ENCODE measurements at regions of chr5 and their contacts with region 1.

Region 1: GRCh38 chr5:72018146-72018803 is 89.0 kb upstream of the MAP1B start:
- DNase-seq: peak; percentile 81
- ATAC-seq: peak; percentile 67
- H3K4me3 Mint-ChIP-seq: no peak overlapping the region
- H3K27ac Mint-ChIP-seq: no peak overlapping the region
- H3K4me1 Mint-ChIP-seq: peaks cover 2% of the 10 kb centered on the region
- H3K27me3 Mint-ChIP-seq: peaks cover 32% of the 10 kb centered on the region
- CTCF ChIP-seq: peak; percentile 96

Region 2: DNA sequence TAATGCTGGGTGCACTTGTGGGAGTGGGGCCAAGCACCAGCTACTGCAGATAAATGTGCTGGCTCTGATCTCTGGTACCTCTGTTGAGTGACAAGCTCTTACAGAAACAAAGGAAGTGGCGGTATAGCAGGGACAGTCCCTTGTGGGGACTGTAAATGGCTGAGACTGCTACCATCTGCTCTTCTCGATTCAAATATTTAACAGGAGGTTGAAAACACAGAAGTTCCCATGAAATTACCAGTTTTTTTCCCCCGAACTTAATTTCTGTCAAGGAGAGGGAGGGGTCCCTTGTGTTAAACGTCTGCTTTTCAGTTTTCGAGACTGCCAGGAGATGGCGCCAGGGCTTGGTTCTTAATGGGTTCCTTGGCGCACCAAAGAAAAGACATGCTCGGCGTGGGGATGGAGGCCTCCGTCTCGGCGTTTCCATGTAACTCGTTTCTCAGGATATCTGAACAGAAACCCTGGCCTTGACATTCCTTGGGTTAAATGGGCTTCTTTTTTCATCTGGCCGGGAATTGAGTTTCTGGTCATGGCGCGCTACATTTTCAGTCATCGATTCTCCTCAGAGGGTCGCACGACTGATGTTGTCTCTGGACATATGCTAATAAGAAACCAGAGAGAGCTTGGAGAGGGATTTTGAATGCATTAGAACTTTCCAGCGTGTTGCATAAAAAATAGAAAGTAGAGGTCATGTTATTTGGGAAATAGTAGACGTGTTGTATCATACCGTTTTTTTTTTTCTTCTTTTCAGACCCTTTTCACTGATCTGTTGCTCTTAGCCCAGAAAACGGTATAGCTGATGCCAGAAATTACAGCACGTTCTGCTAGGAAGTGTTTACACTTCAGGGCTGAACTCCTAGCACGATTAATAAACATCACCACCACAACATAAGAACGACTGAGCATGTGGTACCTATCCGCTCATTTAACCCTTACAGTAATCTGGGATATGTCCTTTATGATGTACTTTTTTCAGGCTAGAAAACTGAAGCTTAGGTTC is 235.2 kb before region 1 on chr5:
- CTCF ChIA-PET with region 1: interaction called, 3 read pairs
- POLR2A ChIA-PET with region 1: no interaction called
- intact Hi-C with region 1: loop called (anchors 5 kb)
- DNase-seq: peak; percentile 81
- ATAC-seq: peak; percentile 97
- H3K4me3 Mint-ChIP-seq: peak overlapping the region; percentile 33
- H3K27ac Mint-ChIP-seq: no peak overlapping the region
- H3K4me1 Mint-ChIP-seq: peaks cover 16% of the 10 kb centered on the region
- H3K27me3 Mint-ChIP-seq: peaks cover 6% of the 10 kb centered on the region
- CTCF ChIP-seq: peak; percentile 61